Spleen (tissue), 13 donors: ENCODE measurements at regions of chr17 and their contacts with region 1.

Region 1: DNA sequence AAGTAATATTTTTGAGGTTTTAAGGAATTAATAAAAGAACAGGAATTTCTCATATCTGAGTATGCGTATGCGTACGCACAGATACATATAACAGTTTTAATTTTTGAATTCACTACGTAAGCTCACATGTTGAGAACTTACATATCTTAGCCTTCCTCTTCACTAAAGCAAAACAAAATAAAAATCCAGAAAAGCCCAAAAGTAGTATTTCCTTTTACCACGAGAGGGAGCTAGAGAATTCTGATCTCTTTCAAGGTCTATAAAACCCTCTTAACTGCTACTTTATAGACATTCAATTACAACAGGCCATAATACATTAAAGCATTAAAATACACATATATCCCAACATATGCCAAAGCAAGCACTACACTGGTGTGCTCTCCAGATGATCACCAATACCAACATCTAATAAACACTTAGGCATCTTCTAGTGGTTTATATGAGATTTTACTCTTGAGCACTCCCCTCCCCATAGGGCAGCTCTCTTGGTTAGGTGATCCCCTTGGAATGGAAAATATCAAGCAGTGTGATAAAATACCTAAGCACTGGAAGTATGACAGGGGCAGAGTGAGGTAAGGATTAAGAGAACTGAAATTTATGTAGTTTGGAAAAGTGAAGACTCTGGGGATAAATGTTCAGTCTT is 94.0 kb downstream of the SKAP1 start:
- DNase-seq: no peak
- H3K4me3 ChIP-seq: no peak overlapping the region
- H3K27ac ChIP-seq: no peak overlapping the region
- H3K4me1 ChIP-seq: peaks cover 0 to 6% (median 0%) of the 10 kb centered on the region in 6 donors
- H3K27me3 ChIP-seq: peaks cover 0 to 41% (median 13%) of the 10 kb centered on the region in 7 donors
- CTCF ChIP-seq: peak; percentile 40 to 79 (median 70)
- POLR2A ChIP-seq: no peak

Region 2: DNA sequence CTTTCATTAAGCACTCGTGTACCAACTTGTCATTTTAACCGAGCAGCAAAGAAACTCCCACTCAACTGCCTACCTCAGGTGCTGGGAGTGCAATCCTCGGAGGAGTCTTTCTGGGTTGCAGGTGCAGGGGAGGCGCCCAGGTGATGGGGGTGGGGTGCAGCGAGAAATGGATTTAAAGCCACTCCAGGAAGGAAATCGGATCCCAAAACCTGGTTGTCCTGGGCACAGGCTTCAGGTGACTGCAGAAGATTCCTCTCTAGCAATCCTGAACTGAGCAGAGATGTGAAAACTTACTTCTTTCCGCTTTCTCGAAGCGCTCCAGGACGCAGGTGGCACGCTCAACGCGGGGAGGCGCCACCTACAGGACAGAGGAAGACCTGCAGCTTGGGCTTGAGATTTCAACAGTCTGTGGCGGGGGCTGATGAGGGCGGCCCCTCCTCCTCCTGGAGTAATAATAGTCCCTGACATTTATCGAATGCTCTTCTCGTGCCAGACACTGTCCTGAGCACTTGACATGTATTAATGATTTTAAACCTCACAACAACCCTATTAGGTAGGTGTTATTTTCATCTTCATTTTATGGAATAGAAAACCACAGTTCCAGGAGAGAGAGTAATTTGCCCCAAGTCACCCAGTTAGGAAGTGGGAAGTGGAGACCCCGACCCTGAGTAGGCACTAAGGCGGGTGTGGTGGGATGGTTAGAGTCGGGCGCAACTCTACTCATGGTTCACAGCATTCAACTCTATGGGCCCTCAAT is 121.3 kb after region 1 on chr17:
- intact Hi-C with region 1: loop called (anchors 5 kb)
- DNase-seq: peak; percentile 91
- H3K4me3 ChIP-seq: peak overlapping the region in 1 of 8 donors; percentile 49
- H3K27ac ChIP-seq: no peak overlapping the region
- H3K4me1 ChIP-seq: peaks cover 0 to 54% (median 28%) of the 10 kb centered on the region in 6 donors
- H3K27me3 ChIP-seq: peaks cover 0 to 35% (median 0%) of the 10 kb centered on the region in 7 donors
- CTCF ChIP-seq: peak; percentile 81 to 95 (median 91)
- POLR2A ChIP-seq: no peak